AG04449 (cell line): ENCODE measurements at regions of chr7 and their contacts with region 1.

Region 1: GRCh38 chr7:129825496-129826267 is 127.1 kb downstream of the UBE2H start:
- DNase-seq: no peak
- H3K4me3 ChIP-seq: peak overlapping the region; percentile 74
- CTCF ChIP-seq: peak; percentile 75

Region 2: GRCh38 chr7:129644634-129645230 is 180.9 kb before region 1 on chr7:
- CTCF ChIA-PET with region 1: interaction called, 16 read pairs
- POLR2A ChIA-PET with region 1: no interaction called
- DNase-seq: no peak
- H3K4me3 ChIP-seq: no peak overlapping the region
- CTCF ChIP-seq: peak; percentile 14

Region 3: GRCh38 chr7:129664029-129665012 is 161.4 kb before region 1 on chr7:
- CTCF ChIA-PET with region 1: interaction called, 162 read pairs
- POLR2A ChIA-PET with region 1: no interaction called
- DNase-seq: peak; percentile 36
- H3K4me3 ChIP-seq: no peak overlapping the region
- CTCF ChIP-seq: peak; percentile 46

Region 4: DNA sequence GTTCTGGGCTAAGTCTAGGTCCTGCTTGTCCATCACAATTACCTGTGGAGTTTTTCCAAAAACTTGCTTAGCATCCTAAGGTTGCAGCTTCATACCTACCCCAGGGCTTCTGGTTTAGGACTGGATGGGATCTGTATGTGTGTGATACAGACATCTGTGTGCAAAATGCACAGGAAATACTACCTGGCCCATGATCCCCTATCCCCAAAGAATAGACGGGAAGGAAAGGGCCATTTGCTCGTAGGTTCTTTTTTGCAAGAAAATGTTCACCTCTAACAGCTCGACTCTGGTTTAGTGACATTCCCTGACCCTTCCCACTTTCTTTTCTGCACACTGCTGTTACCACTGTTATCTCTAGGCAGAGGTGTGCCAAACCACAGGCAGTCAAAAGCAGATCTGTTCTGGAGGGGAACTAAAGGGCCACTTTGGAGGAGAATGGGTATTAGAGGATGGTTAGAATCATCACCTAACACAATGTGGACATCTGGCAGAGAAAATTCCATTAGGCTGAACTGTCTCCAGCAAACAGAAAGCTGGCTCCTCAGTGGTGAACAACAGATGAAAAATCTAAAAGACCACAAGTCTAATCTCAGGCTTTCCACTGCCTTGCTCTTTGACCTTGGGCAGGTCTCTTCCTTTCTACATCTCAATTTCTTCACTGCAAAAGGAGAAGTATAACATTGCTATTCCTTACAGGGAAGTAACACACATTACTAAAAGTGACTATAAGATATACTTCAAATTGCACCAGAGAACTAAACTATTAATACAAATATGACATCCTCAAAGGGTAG is 19.7 kb after region 1 on chr7:
- CTCF ChIA-PET with region 1: interaction called, 139 read pairs
- POLR2A ChIA-PET with region 1: no interaction called
- DNase-seq: no peak
- H3K4me3 ChIP-seq: no peak overlapping the region
- CTCF ChIP-seq: no peak

Region 5: GRCh38 chr7:129864042-129864441 is 38.4 kb after region 1 on chr7:
- CTCF ChIA-PET with region 1: interaction called, 17 read pairs
- POLR2A ChIA-PET with region 1: no interaction called
- DNase-seq: no peak
- H3K4me3 ChIP-seq: no peak overlapping the region
- CTCF ChIP-seq: no peak

Region 6: DNA sequence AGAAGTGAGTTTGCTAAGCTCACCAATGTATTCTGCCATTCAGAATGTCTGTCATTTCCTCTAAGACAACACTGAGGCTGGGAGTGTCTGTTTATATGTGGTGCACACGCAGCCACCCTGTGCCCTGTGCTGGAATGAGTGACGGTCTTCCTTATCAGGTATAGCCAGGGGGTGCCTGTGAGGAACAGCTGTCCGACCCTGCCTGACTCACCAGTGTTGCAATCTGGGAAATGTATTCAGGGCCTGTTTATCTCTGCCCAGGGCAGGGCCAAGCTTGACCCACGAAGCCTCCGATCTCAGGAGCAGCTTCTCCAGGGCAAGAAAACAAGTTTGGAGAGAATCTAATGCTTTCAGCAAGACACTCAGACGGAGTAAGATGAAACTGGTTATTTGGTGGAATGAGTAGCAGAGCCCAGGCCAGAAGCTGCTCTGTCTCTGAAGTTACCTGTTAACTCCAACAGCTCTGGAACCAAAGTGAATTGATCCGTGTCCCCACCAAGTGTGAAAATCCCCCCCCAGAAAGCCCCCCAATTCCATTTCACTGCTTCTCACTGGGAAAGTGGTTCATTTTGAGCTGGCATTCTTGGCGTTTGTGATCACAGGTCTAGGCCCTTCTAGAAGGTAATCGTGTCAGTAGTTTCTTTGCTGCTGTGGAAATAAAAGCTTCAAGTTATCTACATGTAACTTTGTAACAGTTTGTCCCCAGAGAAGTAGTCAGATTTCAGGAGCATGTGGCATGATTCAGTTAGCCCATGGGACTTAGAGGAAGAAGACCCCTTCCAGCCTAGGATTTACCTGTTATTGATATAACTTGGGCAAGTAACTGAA is 133.2 kb after region 1 on chr7:
- CTCF ChIA-PET with region 1: interaction called, 12 read pairs
- POLR2A ChIA-PET with region 1: no interaction called
- DNase-seq: peak; percentile 33
- H3K4me3 ChIP-seq: no peak overlapping the region
- CTCF ChIP-seq: no peak